HEK293T (cell line): ENCODE measurements at regions of chr14 and their contacts with region 1.

Region 1: DNA sequence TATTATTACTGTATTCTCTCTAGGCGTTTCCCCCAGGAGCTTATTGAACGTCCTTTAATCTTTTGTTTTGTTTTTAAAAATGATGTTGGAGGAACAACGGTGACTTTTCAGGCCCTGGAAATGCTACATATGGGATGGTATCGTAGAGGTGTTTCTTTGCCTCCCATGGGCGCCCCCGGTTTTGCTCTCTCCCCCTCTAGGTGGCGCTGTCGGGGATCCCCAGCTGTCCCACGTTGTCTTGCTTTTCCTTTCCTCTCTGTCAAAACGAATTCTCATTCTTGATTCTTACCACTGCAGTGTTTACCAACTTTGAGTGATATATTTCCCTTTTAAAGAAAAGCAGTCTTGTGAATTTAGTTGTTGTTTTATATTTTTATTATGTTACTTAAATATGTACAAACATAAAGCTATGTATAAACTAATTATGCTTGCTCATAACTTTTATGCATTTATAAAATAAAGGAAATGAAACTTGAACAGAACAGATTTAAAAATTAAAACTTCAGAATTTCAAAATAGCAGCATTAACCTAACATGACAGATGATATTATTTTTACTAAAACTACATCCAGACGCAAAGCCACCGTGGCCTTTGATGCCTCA is 171.9 kb downstream of the RGS6 start:
- DNase-seq: peak; percentile 61

Region 2: DNA sequence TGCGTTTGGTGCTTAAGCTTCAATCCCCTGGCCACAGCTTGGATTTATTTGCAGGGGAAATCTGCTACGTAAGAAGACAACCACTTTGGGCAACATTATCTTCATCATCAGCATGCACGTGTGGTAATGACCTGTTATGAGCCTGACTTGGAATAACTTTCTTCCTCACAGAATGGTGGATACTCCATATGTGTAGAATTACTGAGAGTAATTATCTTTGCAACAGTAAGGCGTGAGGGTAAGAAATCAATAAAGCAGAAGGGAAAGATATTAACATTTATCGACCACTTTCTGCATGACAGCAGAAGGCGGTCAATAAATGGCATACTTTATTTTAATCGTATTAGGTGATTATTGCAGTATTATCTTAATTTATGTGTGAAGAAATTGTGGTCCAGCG is 19.2 kb before region 1 on chr14:
- CTCF ChIA-PET with region 1: no interaction called
- POLR2A ChIA-PET with region 1: no interaction called
- DNase-seq: no peak

Region 3: DNA sequence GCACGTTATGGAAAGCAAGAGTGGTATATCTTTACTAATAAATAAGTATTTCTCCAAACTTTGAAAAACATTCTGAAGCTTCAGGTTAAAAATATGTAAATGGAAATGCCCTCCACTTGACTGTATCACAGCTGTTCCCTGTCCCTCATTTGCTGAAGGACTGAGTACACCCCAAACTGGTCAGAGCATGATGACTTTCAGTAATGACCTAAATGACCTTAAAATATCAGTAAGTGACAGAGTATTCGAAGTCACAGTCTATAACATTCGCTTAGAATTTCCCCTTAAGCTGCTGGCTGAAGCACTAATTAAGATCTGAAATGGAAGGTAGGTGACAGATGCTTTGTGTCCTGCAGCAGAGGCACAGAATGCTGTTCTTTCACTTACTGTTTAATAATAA is 19.6 kb after region 1 on chr14:
- CTCF ChIA-PET with region 1: interaction called, 11 read pairs
- POLR2A ChIA-PET with region 1: no interaction called
- DNase-seq: no peak

Region 4: GRCh38 chr14:72380456-72380855 is 276.3 kb after region 1 on chr14:
- CTCF ChIA-PET with region 1: no interaction called
- POLR2A ChIA-PET with region 1: no interaction called
- DNase-seq: no peak